HepG2 (cell line): ENCODE measurements at regions of chr14 and their contacts with region 1.

Region 1: GRCh38 chr14:20606190-20606901 is 15.2 kb upstream of the RNASE12 start:
- DNase-seq: peak; percentile 79
- ATAC-seq: peak; percentile 80
- H3K4me3 ChIP-seq: peak overlapping the region; percentile 25 to 59 (median 33); a peak in 5 of 6 replicates
- H3K27ac ChIP-seq: no peak overlapping the region
- H3K4me1 ChIP-seq: peaks cover 53% of the 10 kb centered on the region
- H3K27me3 ChIP-seq: no peaks in the 10 kb centered on the region; a peak in 1 of 5 replicates
- CTCF ChIP-seq: peak; percentile 95
- EP300 ChIP-seq: peak in 1 of 2 experiments; percentile 38; a peak in 1 of 4 replicates
- POLR2A ChIP-seq: no peak
- RAD21 ChIP-seq: peak; percentile 85

Region 2: GRCh38 chr14:20376071-20376588 is 230.2 kb before region 1 on chr14:
- CTCF ChIA-PET with region 1: no interaction called
- POLR2A ChIA-PET with region 1: no interaction called
- in situ Hi-C with region 1: no loop called
- intact Hi-C with region 1: loop called (anchors 1 kb)
- DNase-seq: peak; percentile 67
- ATAC-seq: peak; percentile 99
- H3K4me3 ChIP-seq: peak overlapping the region in 2 of 3 experiments; percentile 3 to 17; a peak in 2 of 6 replicates
- H3K27ac ChIP-seq: peak overlapping the region; percentile 71
- H3K4me1 ChIP-seq: peaks cover 19% of the 10 kb centered on the region
- H3K27me3 ChIP-seq: no peaks in the 10 kb centered on the region
- CTCF ChIP-seq: no peak
- EP300 ChIP-seq: no peak
- POLR2A ChIP-seq: peak in 1 of 2 experiments; percentile 58; a peak in 2 of 4 replicates
- RAD21 ChIP-seq: no peak

Region 3: GRCh38 chr14:20461274-20462001 is 144.9 kb before region 1 on chr14 and contains the start of gene PIP4P1:
- CTCF ChIA-PET with region 1: interaction called, 3 read pairs
- POLR2A ChIA-PET with region 1: interaction called, 3 read pairs
- in situ Hi-C with region 1: loop called (anchors 25 kb)
- intact Hi-C with region 1: loop called (anchors 2 kb)
- DNase-seq: peak; percentile 100
- ATAC-seq: peak; percentile 97
- H3K4me3 ChIP-seq: peak within 1 kb of the TSS; percentile 67 to 89 (median 78)
- H3K27ac ChIP-seq: peak within 1 kb of the TSS; percentile 80
- H3K4me1 ChIP-seq: peaks cover 56% of the 10 kb centered on the region
- H3K27me3 ChIP-seq: no peaks in the 10 kb centered on the region; a peak in 1 of 5 replicates
- CTCF ChIP-seq: no peak; the same call in 1 of the 2 replicates
- EP300 ChIP-seq: peak; percentile 25 to 56; a peak in 3 of 4 replicates
- POLR2A ChIP-seq: peak in 1 of 2 experiments; percentile 85; a peak in 3 of 4 replicates
- RAD21 ChIP-seq: peak; percentile 51
- total RNA-seq, gene PIP4P1: 31.9 and 33.4 TPM in 2 replicates

Region 4: DNA sequence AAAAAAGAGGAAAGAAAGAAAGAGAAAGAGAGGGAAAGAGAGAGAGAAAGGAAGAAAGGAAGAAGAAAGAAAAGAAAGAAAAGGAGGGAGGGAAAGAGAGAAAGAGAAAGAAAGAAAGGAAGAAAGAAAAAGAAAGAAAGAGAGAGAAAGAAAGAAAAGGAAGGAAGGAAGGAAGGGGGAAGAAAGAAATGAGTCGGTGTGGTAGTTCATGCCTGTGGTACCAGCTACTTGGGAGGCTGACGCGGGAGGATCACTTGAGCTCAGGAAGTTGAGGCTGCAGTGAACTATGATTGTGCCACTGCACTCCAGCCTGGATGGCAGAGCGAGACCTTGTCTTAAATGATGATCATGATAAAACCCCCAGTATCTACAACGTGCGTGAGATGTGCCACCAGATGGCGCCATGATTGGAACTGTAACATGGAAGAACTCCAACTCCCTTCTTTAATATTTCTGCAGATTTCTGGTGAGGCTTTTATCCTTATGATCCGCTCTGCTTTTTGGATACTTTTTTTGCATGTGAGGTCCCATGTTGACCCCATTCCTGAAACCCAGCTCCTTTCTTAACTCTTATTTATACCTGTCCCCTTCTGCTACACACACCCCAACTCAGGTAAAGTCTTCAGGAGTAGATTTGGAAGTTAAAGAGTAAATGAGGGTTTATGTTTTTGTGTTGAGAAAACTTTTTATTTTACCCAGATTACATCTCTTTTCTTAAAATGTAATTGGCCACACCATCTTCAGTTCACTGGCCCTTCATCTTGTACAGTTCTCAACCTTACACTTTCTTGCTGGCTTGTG is 75.4 kb before region 1 on chr14:
- CTCF ChIA-PET with region 1: interaction called, 26 read pairs
- POLR2A ChIA-PET with region 1: no interaction called
- in situ Hi-C with region 1: loop called (anchors 5 kb)
- intact Hi-C with region 1: loop called (anchors 1 kb)
- DNase-seq: peak; percentile 75
- ATAC-seq: peak; percentile 94
- H3K4me3 ChIP-seq: no peak overlapping the region
- H3K27ac ChIP-seq: no peak overlapping the region
- H3K4me1 ChIP-seq: peaks cover 9% of the 10 kb centered on the region; the same call in 1 of the 2 replicates
- H3K27me3 ChIP-seq: no peaks in the 10 kb centered on the region; a peak in 2 of 5 replicates
- CTCF ChIP-seq: peak; percentile 83
- EP300 ChIP-seq: no peak
- POLR2A ChIP-seq: no peak
- RAD21 ChIP-seq: peak; percentile 54; the same call in 1 of the 2 replicates